Heart right ventricle (tissue), 16 donors: ENCODE measurements at regions of chr22 and their contacts with region 1.

Region 1: DNA sequence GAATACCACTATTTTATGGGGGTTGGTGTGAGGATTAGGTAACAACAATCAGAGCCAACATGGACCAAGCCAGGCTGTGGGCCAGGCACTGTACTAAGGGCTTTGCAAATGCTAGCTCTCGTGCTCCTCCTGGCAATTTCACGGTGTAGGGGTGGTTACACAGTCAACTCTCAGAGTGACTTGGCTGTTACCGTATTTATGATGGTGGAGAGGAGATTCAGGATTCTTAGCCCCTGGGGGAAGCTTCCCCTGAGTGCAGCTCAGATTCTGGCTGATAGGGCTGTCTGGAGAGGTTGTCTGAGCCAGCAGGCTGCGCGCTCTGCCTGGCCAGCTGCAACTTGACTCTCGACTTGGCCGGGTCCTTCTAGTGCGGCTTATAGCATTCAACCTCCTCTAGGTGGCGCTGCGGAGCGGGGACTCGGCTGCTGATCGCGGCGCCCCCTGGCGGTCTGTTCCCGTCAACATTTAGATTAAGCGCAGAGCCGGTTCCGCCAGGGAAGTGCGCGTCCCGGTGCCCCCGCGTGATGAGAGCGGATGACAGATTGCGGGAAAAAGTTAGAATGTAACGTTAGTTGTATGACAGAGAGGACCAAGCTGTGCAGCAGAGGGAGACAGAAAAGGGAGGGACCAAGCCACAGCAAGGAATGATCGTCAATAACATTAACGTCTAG is 4.5 kb upstream of the NCF4 start:
- DNase-seq: peak; percentile 90
- ATAC-seq: peak; percentile 87 to 92 (median 90)
- H3K4me3 ChIP-seq: peak overlapping the region in 1 of 10 donors; percentile 10
- H3K27ac ChIP-seq: peak overlapping the region in 1 of 10 donors; percentile 46
- H3K4me1 ChIP-seq: peaks cover 0 to 46% (median 8%) of the 10 kb centered on the region in 9 donors
- H3K27me3 ChIP-seq: peaks cover 0 to 10% (median under 1%) of the 10 kb centered on the region in 7 donors
- CTCF ChIP-seq: peak; percentile 100

Region 2: GRCh38 chr22:36546092-36546804 is 310.0 kb before region 1 on chr22:
- intact Hi-C with region 1: loop called in 6 of 10 experiments (anchors 1 to 5 kb)
- DNase-seq: peak in 1 of 2 donors; percentile 25
- ATAC-seq: peak in 7 of 8 donors; percentile 57 to 71 (median 64)
- H3K4me3 ChIP-seq: no peak overlapping the region
- H3K27ac ChIP-seq: no peak overlapping the region
- H3K4me1 ChIP-seq: peaks cover 0 to 5% (median 0%) of the 10 kb centered on the region in 9 donors
- H3K27me3 ChIP-seq: peaks cover 5 to 49% (median 29%) of the 10 kb centered on the region in 7 donors
- CTCF ChIP-seq: peak in 8 of 9 donors; percentile 33 to 72 (median 62)

Region 3: GRCh38 chr22:36775964-36776669 is 80.1 kb before region 1 on chr22 and contains the start of gene IFT27:
- intact Hi-C with region 1: loop called in 4 of 10 experiments (anchors 5 kb)
- DNase-seq: peak; percentile 93 to 100
- ATAC-seq: peak; percentile 97 to 99 (median 98)
- H3K4me3 ChIP-seq: peak within 1 kb of the TSS; percentile 71 to 98 (median 92)
- H3K27ac ChIP-seq: peak within 1 kb of the TSS in 9 of 10 donors; percentile 83 to 92 (median 88)
- H3K4me1 ChIP-seq: peaks cover 0 to 18% (median 15%) of the 10 kb centered on the region in 9 donors
- H3K27me3 ChIP-seq: no peaks in the 10 kb centered on the region
- CTCF ChIP-seq: no peak
- total RNA-seq, gene IFT27: 20.8 to 34.4 (median 26.3) TPM

Region 4: GRCh38 chr22:36781656-36782627 is 74.3 kb before region 1 on chr22:
- intact Hi-C with region 1: loop called in 8 of 10 experiments (anchors 1 to 5 kb)
- DNase-seq: peak; percentile 69 to 80
- ATAC-seq: peak; percentile 73 to 92 (median 90)
- H3K4me3 ChIP-seq: no peak overlapping the region
- H3K27ac ChIP-seq: peak overlapping the region in 1 of 10 donors; percentile 23
- H3K4me1 ChIP-seq: peaks cover 0 to 9% (median 4%) of the 10 kb centered on the region in 9 donors
- H3K27me3 ChIP-seq: peaks cover 0 to 40% (median 32%) of the 10 kb centered on the region in 7 donors
- CTCF ChIP-seq: peak; percentile 84 to 95 (median 90)

Region 5: DNA sequence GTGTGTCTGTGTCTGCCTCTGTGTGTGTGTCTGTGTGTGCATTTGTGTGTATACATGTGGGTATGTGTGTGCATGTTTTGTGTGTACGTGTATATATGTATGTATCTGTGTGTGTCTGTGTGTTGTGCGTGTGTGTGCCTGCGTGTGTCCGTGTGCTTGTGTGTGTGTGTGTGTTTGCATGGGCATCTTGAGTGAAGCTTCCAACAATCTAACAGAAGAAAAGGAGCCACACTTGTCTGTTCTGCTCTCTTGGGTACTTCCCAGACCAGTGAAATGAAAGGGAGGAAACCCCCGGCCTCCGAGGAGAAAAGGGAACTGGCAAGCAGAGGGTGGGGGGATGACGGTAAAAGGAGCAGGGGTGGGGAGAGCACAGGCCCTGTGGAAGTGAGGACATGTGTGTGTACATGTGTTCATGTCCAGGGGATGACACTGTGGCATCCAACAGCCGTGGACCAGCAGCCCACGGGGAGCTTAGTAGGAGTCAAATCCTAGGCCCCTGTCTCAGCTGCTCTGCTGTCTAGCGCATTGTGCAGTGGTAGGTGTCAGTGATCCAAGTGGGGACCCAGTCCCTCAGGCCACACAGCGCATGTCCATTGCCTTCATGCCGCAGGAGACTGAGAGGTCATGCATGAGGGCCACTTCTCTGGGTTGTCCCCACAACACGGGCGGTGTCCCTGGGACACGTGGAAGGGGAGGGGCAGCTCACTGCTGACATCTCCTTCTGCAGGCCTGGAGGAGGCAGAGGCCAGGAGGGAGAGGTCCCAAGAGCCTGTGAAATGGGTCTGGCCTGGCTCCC is 65.3 kb after region 1 on chr22:
- intact Hi-C with region 1: no loop called
- DNase-seq: peak in 1 of 2 donors; percentile 29
- ATAC-seq: peak in 5 of 8 donors; percentile 31 to 68 (median 48)
- H3K4me3 ChIP-seq: no peak overlapping the region
- H3K27ac ChIP-seq: peak overlapping the region in 1 of 10 donors; percentile 75
- H3K4me1 ChIP-seq: peaks cover 0 to 42% (median 0%) of the 10 kb centered on the region in 9 donors
- H3K27me3 ChIP-seq: peaks cover 0 to 40% (median 23%) of the 10 kb centered on the region in 7 donors
- CTCF ChIP-seq: no peak

Region 6: GRCh38 chr22:36977947-36978660 is 121.8 kb after region 1 on chr22:
- intact Hi-C with region 1: loop called in 6 of 10 experiments (anchors 1 to 5 kb)
- DNase-seq: peak; percentile 90 to 91
- ATAC-seq: peak; percentile 94 to 98 (median 97)
- H3K4me3 ChIP-seq: peak overlapping the region in 9 of 10 donors; percentile 24 to 57 (median 52)
- H3K27ac ChIP-seq: peak overlapping the region in 2 of 10 donors; percentile 16 to 80
- H3K4me1 ChIP-seq: peaks cover 0 to 11% (median 5%) of the 10 kb centered on the region in 9 donors
- H3K27me3 ChIP-seq: peaks cover 0 to 26% (median 11%) of the 10 kb centered on the region in 7 donors
- CTCF ChIP-seq: peak; percentile 90 to 99 (median 96)

Region 7: DNA sequence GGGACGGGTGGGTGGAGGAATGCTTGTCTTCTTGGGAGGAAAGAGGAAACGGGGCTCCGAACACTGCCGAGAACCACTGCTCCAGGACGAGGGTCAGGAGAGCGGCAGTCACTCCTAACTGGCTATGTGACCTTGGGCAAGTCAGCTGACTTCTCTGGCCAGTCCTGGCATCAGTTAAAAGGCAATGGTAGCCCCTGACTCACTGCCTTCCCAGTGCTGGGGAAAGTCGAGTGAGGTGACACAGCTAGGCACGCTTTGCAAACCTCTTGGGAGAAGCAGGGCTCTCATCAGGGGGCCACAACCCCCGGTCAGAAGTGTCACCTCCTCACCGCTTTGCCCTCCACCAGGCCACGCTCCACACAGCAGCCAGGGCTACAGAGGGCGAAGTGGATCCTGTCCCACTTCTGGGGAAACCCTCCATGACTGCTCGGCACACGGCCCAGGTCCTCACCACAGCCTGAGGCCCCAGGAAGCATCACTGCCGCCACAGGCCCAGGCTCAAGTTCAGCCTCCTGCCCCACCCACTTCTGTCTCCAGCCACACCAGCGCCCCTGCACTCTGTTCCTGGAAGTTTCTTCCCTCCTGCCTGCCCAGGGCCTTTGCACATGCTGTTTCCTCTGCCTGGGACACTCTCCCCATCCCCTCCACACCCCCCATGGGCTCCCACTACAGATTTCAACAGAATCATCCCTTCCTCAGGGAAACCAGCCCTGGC is 277.2 kb after region 1 on chr22:
- intact Hi-C with region 1: no loop called
- DNase-seq: no peak
- ATAC-seq: no peak
- H3K4me3 ChIP-seq: no peak overlapping the region
- H3K27ac ChIP-seq: no peak overlapping the region
- H3K4me1 ChIP-seq: no peaks in the 10 kb centered on the region
- H3K27me3 ChIP-seq: peaks cover 0 to 32% (median 5%) of the 10 kb centered on the region in 7 donors
- CTCF ChIP-seq: no peak